Activated CD4-positive, alpha-beta T cell treated with anti-CD3 and anti-CD28 coated beads, Interleukin-2, amount 10 ng/mL, durations not matched to agents 7 days and 5 days (primary cell): ENCODE measurements at regions of chr12 and their contacts with region 1.

Region 1: DNA sequence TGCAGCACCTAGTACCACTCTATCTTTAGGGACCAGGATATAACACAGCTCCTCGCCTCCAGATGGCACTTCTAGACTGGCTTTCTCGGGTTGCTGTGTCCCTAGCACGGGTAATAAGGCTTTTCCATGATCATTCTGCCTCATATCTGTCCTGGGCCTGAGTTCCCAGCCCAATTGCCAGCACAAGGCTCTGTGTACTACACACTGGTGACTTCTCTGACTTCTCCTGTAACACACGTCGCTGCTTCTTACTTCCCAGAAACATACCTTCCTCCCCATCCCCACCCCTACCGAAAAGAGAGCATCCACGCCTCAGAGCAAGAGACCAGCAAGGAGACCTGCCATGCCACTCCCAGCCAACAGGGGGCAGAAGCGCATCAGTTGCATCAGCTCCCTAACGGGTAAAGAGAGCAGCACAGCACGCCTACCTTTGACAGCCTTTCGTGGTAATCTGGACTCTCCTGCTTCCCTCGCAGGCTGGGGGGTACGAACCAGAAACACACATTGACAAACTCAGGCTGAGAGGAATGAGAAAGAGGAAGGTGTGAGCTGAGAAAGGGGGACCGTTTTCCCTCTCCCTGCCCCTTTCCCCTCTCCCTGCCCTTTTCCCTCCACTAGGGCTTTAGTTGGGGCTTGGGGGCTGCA is 21.2 kb upstream of the ZNF740 start:
- DNase-seq: peak; percentile 93
- H3K4me3 Mint-ChIP-seq: no peak overlapping the region
- H3K27ac Mint-ChIP-seq: peak overlapping the region; percentile 26
- H3K4me1 Mint-ChIP-seq: peaks cover 9% of the 10 kb centered on the region
- H3K27me3 Mint-ChIP-seq: no peaks in the 10 kb centered on the region

Region 2: DNA sequence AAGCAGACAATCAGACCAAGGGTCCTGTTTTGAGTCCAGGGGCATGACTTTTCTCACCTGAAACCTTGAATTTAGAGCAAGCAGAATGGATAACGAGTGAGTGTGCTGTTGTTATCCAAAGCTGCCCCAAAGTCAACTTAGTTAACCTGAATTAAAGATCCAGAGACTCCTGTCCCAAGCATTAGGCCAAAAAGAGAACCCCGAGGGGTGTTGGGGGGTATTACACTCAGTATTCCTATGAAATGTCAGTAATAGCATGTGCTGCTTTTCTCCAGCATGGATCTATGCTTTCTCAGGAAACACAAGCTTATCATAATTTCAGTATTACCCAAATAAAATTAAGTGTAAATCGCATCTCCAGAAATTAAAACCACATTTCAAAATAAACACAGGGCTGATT is 134.1 kb before region 1 on chr12:
- CTCF ChIA-PET with region 1: no interaction called
- POLR2A ChIA-PET with region 1: no interaction called
- DNase-seq: no peak
- H3K4me3 Mint-ChIP-seq: no peak overlapping the region
- H3K27ac Mint-ChIP-seq: no peak overlapping the region
- H3K4me1 Mint-ChIP-seq: peaks cover 2% of the 10 kb centered on the region
- H3K27me3 Mint-ChIP-seq: no peaks in the 10 kb centered on the region

Region 3: GRCh38 chr12:53086361-53086760 is 73.0 kb before region 1 on chr12:
- CTCF ChIA-PET with region 1: no interaction called
- POLR2A ChIA-PET with region 1: no interaction called
- DNase-seq: no peak
- H3K4me3 Mint-ChIP-seq: no peak overlapping the region
- H3K27ac Mint-ChIP-seq: no peak overlapping the region
- H3K4me1 Mint-ChIP-seq: peaks cover 5% of the 10 kb centered on the region
- H3K27me3 Mint-ChIP-seq: peaks cover 28% of the 10 kb centered on the region

Region 4: GRCh38 chr12:53098982-53099651 is 60.2 kb before region 1 on chr12:
- CTCF ChIA-PET with region 1: interaction called, 12 read pairs
- POLR2A ChIA-PET with region 1: no interaction called
- DNase-seq: peak; percentile 91
- H3K4me3 Mint-ChIP-seq: peak overlapping the region; percentile 18
- H3K27ac Mint-ChIP-seq: peak overlapping the region; percentile 60
- H3K4me1 Mint-ChIP-seq: peaks cover 63% of the 10 kb centered on the region
- H3K27me3 Mint-ChIP-seq: peaks cover 22% of the 10 kb centered on the region

Region 5: DNA sequence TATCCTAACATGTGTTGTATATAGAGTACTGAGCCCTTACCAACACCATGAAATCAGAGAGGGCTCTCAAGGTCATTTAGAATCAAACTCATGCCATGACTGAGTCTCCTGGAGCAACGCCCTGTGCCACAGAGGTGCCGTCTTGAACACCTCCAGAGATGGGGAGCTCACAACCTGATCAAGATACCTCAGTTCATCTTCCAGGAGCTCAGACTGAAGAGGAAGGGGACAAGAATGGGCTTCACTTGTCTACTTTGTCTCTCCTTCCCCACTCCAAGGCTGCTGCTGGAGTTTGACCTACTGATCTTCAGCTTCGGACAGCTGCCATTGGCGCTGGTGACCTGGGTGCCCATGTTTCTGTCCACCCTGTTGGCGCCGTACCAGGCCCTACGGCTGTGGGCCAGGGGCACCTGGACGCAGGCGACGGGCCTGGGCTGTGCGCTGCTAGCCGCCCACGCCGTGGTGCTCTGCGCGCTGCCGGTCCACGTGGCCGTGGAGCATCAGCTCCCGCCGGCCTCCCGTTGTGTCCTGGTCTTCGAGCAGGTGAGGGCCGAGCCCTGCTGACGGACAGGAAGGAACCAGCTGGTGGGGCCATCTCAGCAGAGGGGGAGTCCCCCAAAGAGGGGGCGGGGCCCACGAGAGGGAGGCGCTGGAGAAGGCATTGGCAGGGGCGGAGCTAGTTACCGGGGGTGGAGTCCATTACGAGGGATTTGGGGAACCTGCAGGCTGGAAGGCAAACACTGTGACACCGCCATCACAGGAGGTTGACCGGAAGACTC is 44.0 kb before region 1 on chr12:
- CTCF ChIA-PET with region 1: interaction called, 11 read pairs
- POLR2A ChIA-PET with region 1: no interaction called
- DNase-seq: no peak
- H3K4me3 Mint-ChIP-seq: no peak overlapping the region
- H3K27ac Mint-ChIP-seq: no peak overlapping the region
- H3K4me1 Mint-ChIP-seq: no peaks in the 10 kb centered on the region
- H3K27me3 Mint-ChIP-seq: peaks cover 2% of the 10 kb centered on the region

Region 6: GRCh38 chr12:53171725-53172329 is 12.5 kb after region 1 on chr12:
- CTCF ChIA-PET with region 1: interaction called, 29 read pairs
- POLR2A ChIA-PET with region 1: no interaction called
- DNase-seq: no peak
- H3K4me3 Mint-ChIP-seq: no peak overlapping the region
- H3K27ac Mint-ChIP-seq: peak overlapping the region; percentile 52
- H3K4me1 Mint-ChIP-seq: peaks cover 11% of the 10 kb centered on the region
- H3K27me3 Mint-ChIP-seq: no peaks in the 10 kb centered on the region

Region 7: GRCh38 chr12:53180220-53180930 is 21.1 kb after region 1 on chr12 and contains the starts of genes CSAD and ZNF740:
- CTCF ChIA-PET with region 1: interaction called, 33 read pairs
- POLR2A ChIA-PET with region 1: no interaction called
- DNase-seq: peak; percentile 98
- H3K4me3 Mint-ChIP-seq: peak within 1 kb of the TSS; percentile 84
- H3K27ac Mint-ChIP-seq: peak within 1 kb of the TSS; percentile 95
- H3K4me1 Mint-ChIP-seq: peaks cover 60% of the 10 kb centered on the region
- H3K27me3 Mint-ChIP-seq: no peaks in the 10 kb centered on the region
- total RNA-seq, gene CSAD: 33.3 to 34.7 TPM
- total RNA-seq, gene ZNF740: 38.9 to 44.1 TPM

Region 8: DNA sequence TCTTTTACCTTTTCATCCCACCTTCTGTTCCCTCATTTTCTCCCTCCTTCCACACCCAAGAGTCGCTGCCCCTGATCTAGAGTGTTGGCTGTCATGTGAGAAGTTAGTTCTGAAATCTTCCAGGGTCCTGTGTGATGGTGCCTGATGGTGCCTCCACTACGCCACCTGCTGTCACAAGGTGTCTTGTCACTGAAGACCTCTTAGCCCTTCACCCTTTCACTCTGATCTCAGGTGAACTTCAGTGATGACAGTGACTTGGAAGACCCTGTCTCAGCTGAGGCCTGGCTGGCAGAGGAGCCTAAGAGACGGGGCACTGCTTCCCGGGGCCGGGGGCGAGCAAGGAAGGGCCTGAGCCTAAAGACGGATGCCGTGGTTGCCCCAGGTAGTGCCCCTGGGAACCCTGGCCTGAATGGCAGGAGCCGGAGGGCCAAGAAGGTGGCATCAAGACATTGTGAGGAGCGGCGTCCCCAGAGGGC is 128.5 kb after region 1 on chr12:
- CTCF ChIA-PET with region 1: interaction called, 15 read pairs
- POLR2A ChIA-PET with region 1: no interaction called
- DNase-seq: peak; percentile 76
- H3K4me3 Mint-ChIP-seq: no peak overlapping the region
- H3K27ac Mint-ChIP-seq: peak overlapping the region; percentile 64
- H3K4me1 Mint-ChIP-seq: peaks cover 9% of the 10 kb centered on the region
- H3K27me3 Mint-ChIP-seq: no peaks in the 10 kb centered on the region